GM10248 (cell line): ENCODE measurements at regions of chr3 and their contacts with region 1.

Region 1: GRCh38 chr3:157572559-157573270 is 69.5 kb upstream of the VEPH1 start:
- DNase-seq: peak; percentile 48
- CTCF ChIP-seq: peak; percentile 60

Region 2: DNA sequence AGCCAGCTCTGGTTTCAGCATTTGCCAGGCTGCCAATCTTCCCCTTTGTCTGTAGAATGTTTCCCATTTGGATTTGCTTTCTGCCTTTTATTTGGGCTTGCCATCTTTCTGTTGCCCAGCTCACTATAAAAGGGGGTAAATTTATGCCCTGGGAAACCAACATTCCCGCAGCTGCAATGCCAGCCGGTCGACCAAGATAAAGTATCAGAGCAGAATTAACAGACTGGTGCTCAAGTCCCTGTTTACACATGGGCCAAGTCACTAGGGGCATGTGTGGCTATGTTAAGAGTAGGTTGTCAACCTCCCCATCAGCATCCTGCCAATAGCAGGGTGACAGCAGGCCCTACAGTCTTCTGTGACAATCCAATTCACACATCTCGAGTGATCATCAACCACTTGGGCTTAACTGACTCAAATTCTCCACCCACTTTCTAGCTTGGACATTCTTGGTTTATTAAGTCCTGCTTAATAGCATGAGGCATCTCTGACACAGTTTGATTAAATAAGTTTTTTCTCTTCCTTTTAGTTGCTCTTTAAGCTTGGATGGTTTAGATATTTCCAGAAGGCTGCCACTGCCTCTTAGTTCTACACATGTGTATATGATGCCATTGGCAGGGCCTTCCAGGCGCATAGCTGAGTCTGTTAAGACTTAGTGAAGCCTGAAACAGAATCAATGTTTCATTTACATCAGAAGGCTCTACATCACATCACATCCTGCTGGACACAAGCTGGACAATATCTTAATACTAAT is 45.4 kb before region 1 on chr3:
- CTCF ChIA-PET with region 1: interaction called, 174 read pairs
- POLR2A ChIA-PET with region 1: interaction called, 3 read pairs
- DNase-seq: no peak
- CTCF ChIP-seq: no peak

Region 3: DNA sequence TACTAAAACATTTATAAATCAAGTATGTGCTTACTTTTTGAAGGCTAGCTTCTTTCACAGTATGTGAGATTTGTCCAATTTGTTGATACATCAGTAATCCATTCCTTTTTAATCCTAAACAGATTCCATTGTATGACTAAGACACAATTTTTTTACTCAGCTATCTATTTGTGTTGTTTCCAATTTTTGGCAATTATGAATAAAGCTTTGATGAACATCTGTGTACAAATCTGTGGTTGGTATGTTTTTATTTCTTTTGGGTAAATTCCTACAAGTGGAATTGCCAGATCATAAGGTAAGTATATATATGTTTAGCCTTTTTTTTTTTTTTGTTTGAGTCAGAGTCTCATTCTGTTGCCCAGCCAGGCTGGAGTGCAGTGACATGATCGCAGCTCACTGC is 13.3 kb before region 1 on chr3:
- CTCF ChIA-PET with region 1: interaction called, 16 read pairs
- POLR2A ChIA-PET with region 1: no interaction called
- DNase-seq: no peak
- CTCF ChIP-seq: no peak

Region 4: DNA sequence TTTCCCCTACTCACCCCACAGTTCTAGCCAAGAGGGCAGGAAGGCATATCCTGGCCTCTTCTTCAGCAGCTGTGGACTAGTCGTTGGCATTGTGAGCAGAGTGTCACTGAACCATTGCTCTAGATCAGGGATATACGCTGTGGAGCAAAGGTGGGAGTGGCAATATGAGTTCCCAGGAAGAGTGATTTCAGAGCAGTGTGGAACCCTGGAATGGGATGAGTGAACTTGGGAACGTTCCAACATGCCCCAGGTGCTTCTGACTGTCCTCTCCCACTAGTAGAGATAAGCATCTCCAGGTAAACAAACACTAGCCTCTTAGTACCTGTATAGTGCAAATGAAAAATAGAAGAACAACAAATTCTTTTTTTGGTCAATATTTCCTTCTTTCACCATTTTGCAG is 54.1 kb after region 1 on chr3:
- CTCF ChIA-PET with region 1: no interaction called
- POLR2A ChIA-PET with region 1: no interaction called
- DNase-seq: no peak
- CTCF ChIP-seq: no peak